ENCODE measurements at regions of chr12 and their contacts with region 1.

Region 1: GRCh38 chr12:53065975-53066931 is 12.9 kb downstream of the SPRYD3 start:
- DNase-seq: peak; percentile 66
- H3K4me3 ChIP-seq: no peak overlapping the region
- CTCF ChIP-seq: peak; percentile 80

Region 2: DNA sequence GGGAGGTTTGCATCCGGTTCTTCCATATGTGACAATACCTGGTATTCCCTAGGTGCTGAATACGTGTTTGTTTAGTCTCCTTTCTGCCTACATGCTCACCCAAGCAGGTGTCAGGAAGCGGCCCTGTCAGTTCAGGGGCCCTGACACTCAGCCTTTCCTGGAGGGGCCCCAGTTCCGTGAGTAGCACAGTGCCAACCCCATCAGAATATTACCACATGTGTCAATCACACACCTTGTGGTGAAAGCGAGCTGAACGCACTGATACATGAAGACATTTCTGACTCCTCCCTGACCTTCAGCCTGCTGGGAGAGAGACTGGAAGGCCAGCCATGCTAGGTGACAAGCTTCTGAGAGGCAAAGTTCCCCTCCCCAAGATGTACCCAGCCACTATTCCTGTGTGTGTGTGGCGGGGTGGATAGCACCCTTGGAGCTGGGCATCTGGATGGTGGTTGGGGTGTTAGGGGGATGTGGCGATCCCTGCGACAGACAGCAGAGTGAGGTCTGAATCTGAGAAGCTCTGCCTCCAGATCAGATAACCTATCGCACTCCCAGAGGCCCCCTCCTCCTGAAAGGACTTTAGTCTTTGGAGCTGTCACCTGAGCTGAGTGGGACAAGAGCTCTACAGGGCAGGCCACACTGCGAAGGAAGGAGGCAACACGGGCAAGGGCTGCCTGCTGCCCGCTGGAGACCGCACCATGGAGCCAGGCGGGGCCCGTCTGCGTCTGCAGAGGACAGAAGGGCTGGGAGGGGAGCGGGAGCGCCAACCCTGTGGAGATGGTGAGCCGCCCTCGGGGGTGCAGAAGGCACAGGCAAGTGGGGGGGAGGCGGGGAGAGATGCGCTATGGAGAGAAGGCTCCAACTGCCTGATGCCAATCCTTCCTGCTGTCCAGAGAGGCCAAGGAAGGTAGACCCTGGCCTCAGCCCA is 36.9 kb after region 1 on chr12 and contains the start of gene SOAT2:
- in situ Hi-C with region 1: loop called (anchors 5 kb)
- DNase-seq: no peak
- H3K4me3 ChIP-seq: no peak within 1 kb of the TSS
- CTCF ChIP-seq: no peak

Region 3: GRCh38 chr12:53174881-53175491 is 108.7 kb after region 1 on chr12:
- in situ Hi-C with region 1: loop called (anchors 5 kb)
- DNase-seq: no peak
- H3K4me3 ChIP-seq: no peak overlapping the region
- CTCF ChIP-seq: peak; percentile 20

Region 4: DNA sequence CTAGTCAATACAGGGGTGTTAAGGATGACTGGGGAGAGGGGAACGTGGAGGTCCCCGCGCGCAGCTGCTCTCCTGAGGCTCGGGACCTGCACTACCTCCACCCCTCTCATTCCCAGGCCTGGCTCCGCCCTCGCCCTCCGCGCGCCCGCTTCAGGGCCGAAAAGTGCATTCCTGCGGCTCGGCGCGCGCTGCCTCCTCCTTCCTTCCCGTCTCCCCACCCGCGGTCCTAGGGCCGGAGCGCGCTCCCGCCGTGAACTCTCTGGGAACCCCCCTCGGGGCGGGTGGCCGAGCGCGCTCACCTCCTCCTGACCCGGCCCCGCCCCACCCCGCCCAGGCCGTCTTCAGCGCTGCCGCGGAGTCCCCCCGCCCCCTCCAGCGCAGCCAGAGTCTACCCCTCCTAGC is 154.5 kb after region 1 on chr12:
- in situ Hi-C with region 1: no loop called
- DNase-seq: peak; percentile 71
- H3K4me3 ChIP-seq: peak overlapping the region; percentile 74
- CTCF ChIP-seq: no peak